ENCODE measurements at regions of chrX and their contacts with region 1.

Region 1: GRCh38 chrX:101429934-101430333 is 21.9 kb downstream of the HNRNPH2 start:
- DNase-seq: no peak
- ATAC-seq: no peak
- H3K4me3 ChIP-seq: no peak overlapping the region
- H3K27ac ChIP-seq: no peak overlapping the region
- H3K4me1 ChIP-seq: no peaks in the 10 kb centered on the region
- H3K27me3 ChIP-seq: no peaks in the 10 kb centered on the region
- CTCF ChIP-seq: no peak
- POLR2A ChIP-seq: no peak

Region 2: DNA sequence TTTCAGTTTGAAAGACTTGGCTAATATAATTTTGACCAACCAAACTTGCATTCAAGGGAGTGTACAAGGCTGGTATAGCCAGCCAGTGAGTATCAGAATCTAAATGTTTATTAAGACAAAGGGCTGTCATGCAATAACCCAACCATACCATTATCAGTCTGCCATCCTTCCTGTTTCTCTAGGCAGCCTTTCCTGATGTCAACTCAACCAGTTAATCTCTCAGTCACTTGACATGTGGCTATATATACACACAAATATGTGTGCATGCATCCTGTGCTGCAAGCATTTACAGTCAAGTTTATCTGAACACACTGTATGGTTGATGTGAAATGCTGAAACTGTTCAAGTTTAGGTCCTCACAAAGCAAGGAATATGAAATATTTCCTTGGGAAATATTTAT is 61.1 kb before region 1 on chrX:
- intact Hi-C with region 1: no loop called
- DNase-seq: no peak
- ATAC-seq: no peak
- H3K4me3 ChIP-seq: no peak overlapping the region
- H3K27ac ChIP-seq: no peak overlapping the region
- H3K4me1 ChIP-seq: no peaks in the 10 kb centered on the region
- H3K27me3 ChIP-seq: no peaks in the 10 kb centered on the region
- CTCF ChIP-seq: no peak
- POLR2A ChIP-seq: no peak

Region 3: DNA sequence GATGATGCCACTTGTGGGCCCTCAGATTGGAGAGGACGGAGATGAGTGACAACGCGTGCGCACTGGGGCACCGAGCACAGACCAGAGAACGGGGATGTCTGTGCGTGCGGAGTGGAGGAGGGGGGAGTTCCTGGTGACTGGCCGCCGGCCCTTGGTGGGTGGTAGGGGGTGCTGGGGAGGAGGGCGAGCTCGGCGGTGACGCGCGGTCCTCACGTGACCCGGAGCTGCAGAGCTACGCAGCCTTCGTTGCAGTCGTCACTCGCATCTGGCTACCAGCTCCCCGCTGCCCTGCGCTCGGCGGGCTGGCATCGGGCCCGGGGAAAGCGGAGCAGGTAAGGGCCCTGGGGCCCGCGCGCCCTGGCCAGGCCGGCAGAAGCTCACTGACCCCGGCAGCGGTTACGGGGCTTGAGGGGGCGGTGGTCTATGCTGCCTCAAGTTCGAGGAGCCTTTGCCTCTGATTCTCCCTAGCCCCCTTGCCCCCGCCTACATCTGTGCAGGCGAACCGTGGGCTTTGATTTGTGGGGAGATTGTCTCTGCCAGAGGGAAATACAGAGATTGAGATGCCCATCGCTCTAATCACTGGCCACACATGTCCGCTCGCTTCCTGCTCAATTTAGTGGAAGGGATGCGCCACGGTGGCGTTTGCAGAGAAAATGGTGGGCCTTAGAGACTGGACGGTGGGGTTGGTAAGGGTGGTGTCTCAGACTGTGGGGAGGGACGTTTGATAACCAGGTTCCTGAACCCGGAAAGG is 55.4 kb after region 1 on chrX and contains the start of gene ARMCX4:
- intact Hi-C with region 1: loop called in 1 of 10 experiments (anchors 10 kb)
- DNase-seq: peak; percentile 35 to 53 (median 49)
- ATAC-seq: peak in 3 of 4 donors; percentile 76 to 83 (median 78)
- H3K4me3 ChIP-seq: peak within 1 kb of the TSS; percentile 17 to 66 (median 56)
- H3K27ac ChIP-seq: no peak within 1 kb of the TSS
- H3K4me1 ChIP-seq: no peaks in the 10 kb centered on the region
- H3K27me3 ChIP-seq: peaks cover 0 to 5% (median 0%) of the 10 kb centered on the region in 9 donors
- CTCF ChIP-seq: no peak
- POLR2A ChIP-seq: no peak
- total RNA-seq, gene ARMCX4: 1.1 to 11.0 (median 5.1) TPM

Measured in heart left ventricle (tissue), 16 donors.